HCT116 (cell line): ENCODE measurements at regions of chr10 and their contacts with region 1.

Region 1: DNA sequence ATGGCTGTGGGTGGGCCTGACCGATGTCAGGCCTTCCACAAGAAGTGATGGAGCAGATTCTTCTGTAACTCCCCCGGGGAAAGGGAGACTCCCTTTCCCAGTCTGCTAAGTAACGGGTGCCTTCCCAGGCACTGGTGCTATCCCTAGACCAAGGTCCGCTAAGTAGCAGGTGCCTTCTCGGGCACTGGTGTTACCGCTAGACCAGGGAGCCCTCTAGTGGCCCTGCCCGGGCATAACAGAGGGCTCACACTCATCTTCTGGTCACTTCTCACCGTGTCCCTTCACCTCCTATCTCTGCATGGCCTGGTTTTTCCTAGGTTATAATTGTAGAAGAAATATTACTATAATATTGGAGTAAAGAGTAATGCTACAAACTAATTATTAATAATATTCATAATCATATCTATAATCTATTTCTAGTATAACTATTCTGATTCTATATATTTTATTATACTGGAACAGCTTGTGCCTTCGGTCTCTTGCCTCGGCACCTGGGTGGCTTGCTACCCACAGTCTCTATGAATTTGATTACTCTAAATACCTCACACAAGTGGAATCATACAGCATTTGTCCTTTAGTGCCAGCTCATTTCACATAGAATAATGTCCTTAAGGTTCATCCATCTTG is 1378.7 kb downstream of the XPNPEP1 start:
- DNase-seq: no peak
- ATAC-seq: peak; percentile 76
- H3K4me3 ChIP-seq: no peak overlapping the region
- H3K27ac ChIP-seq: no peak overlapping the region
- H3K4me1 ChIP-seq: no peaks in the 10 kb centered on the region
- H3K27me3 ChIP-seq: no peaks in the 10 kb centered on the region
- CTCF ChIP-seq: peak in 2 of 3 experiments; percentile 73 to 88; a peak in 4 of 6 replicates
- POLR2A ChIP-seq: no peak
- RAD21 ChIP-seq: peak; percentile 57

Region 2: DNA sequence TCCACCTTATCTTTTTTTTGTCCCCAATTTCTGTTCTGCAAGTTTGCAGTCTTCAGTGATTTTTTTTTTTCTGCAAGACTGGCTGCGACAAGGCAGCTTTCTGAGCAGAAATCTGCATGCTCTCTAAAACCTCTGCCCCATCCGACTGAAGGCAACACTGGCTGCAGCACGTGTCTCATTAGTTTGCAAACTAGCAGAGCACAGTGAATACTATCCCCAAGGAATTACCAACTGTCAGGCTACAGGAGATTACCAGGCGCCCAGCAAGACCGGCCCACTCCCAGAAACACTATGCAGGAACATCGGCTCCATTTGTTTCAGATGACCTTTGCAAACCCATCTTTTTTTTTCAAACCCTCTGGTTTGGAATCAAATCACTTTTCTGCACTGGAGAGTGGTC is 1918.9 kb before region 1 on chr10:
- CTCF ChIA-PET with region 1: no interaction called
- POLR2A ChIA-PET with region 1: no interaction called
- RAD21 ChIA-PET with region 1: no interaction called
- intact Hi-C with region 1: loop called (anchors 2 kb)
- DNase-seq: no peak
- ATAC-seq: no peak
- H3K4me3 ChIP-seq: no peak overlapping the region
- H3K27ac ChIP-seq: no peak overlapping the region
- H3K4me1 ChIP-seq: no peaks in the 10 kb centered on the region
- H3K27me3 ChIP-seq: no peaks in the 10 kb centered on the region
- CTCF ChIP-seq: no peak
- POLR2A ChIP-seq: no peak
- RAD21 ChIP-seq: no peak

Region 3: DNA sequence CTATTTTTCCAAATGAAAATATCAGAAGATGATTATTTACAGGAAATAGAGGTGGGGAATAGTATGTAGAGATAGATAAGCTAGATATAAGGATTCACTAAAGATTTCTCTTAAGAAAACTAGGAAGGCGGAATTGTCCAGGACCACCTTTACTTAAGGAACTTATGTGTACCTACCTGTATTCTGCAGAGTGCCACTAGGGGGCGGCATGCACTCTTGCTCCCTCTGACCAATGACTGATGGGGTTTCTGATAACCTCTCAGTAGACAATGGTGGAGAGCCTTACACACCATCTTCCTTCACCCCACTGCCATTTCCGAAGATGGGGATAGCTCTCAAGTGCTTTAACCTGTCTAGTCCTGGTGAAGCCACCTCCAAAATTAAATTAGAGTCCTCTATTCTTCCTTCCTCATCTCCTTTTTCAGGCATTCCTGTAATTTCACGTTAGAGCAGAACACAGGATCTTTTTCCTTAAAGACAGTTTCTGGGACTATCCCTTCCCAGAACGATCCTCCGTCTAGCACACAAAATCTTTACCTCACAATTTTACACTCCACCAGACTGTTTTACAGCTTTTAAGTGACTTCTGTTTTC is 1833.2 kb before region 1 on chr10:
- CTCF ChIA-PET with region 1: no interaction called
- POLR2A ChIA-PET with region 1: no interaction called
- RAD21 ChIA-PET with region 1: no interaction called
- intact Hi-C with region 1: loop called (anchors 5 kb)
- DNase-seq: peak; percentile 6
- ATAC-seq: peak; percentile 68
- H3K4me3 ChIP-seq: no peak overlapping the region
- H3K27ac ChIP-seq: no peak overlapping the region
- H3K4me1 ChIP-seq: no peaks in the 10 kb centered on the region
- H3K27me3 ChIP-seq: no peaks in the 10 kb centered on the region
- CTCF ChIP-seq: peak in 2 of 3 experiments; percentile 70 to 77; a peak in 4 of 6 replicates
- POLR2A ChIP-seq: no peak
- RAD21 ChIP-seq: peak; percentile 34

Region 4: GRCh38 chr10:108521762-108522492 is 22.7 kb before region 1 on chr10:
- CTCF ChIA-PET with region 1: no interaction called
- POLR2A ChIA-PET with region 1: no interaction called
- RAD21 ChIA-PET with region 1: no interaction called
- intact Hi-C with region 1: no loop called
- DNase-seq: no peak
- ATAC-seq: no peak
- H3K4me3 ChIP-seq: no peak overlapping the region
- H3K27ac ChIP-seq: no peak overlapping the region
- H3K4me1 ChIP-seq: no peaks in the 10 kb centered on the region
- H3K27me3 ChIP-seq: no peaks in the 10 kb centered on the region
- CTCF ChIP-seq: no peak
- POLR2A ChIP-seq: no peak
- RAD21 ChIP-seq: no peak

Region 5: DNA sequence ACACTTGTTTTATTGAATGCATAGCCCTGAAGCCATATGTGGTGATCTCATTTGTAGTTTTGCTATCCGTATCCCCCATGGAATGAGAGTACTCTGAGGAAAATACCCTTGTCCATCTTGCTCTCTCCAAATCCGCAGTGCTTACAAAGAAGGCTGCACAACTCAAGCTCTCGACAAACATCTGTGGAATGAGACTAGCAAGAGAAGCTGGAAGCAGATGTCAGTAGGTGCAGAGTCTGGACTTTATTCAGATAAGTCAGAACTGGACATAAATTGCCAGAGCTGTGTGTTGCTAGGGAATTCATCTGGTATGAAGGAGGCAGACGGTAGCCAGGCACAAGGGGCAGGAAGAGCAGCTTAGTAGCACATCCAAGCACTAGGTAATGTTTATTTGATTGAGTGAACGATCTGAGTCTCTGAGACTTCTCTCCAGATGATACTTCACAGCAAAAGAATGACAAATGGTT is 332.5 kb after region 1 on chr10:
- CTCF ChIA-PET with region 1: no interaction called
- POLR2A ChIA-PET with region 1: no interaction called
- RAD21 ChIA-PET with region 1: no interaction called
- intact Hi-C with region 1: no loop called
- DNase-seq: no peak
- ATAC-seq: no peak
- H3K4me3 ChIP-seq: no peak overlapping the region
- H3K27ac ChIP-seq: no peak overlapping the region
- H3K4me1 ChIP-seq: no peaks in the 10 kb centered on the region
- H3K27me3 ChIP-seq: no peaks in the 10 kb centered on the region
- CTCF ChIP-seq: no peak
- POLR2A ChIP-seq: no peak
- RAD21 ChIP-seq: no peak

Region 6: DNA sequence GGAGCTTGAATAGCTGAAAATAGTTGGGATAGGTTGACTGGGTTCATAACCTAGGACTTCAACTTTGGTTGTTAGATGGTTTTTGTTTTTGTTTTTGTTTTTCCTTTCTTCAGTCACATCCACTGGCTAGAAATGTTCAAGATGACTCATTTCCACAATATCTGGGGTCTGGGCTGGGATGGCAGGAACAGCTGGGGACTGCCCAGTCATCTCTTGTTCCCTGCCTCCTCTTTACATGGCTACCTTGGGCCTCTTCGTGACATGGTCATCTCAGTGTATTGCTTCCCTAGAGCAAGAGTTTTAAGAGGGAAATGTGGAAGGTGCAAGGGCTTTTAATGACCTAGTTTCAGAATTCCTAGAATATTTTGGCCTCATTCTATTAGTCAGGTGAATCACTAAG is 462.9 kb after region 1 on chr10:
- CTCF ChIA-PET with region 1: no interaction called
- POLR2A ChIA-PET with region 1: no interaction called
- RAD21 ChIA-PET with region 1: no interaction called
- intact Hi-C with region 1: no loop called
- DNase-seq: no peak
- ATAC-seq: no peak
- H3K4me3 ChIP-seq: no peak overlapping the region
- H3K27ac ChIP-seq: no peak overlapping the region
- H3K4me1 ChIP-seq: no peaks in the 10 kb centered on the region
- H3K27me3 ChIP-seq: no peaks in the 10 kb centered on the region
- CTCF ChIP-seq: no peak
- POLR2A ChIP-seq: no peak
- RAD21 ChIP-seq: no peak